ENCODE measurements at regions of chr19 and their contacts with region 1.

Region 1: GRCh38 chr19:44723952-44724319 is 24.6 kb upstream of the BCL3 start:
- DNase-seq: peak; percentile 64
- ATAC-seq: peak; percentile 71
- H3K4me3 ChIP-seq: peak overlapping the region in 2 of 3 experiments; percentile 11 to 61; a peak in 2 of 6 replicates
- H3K27ac ChIP-seq: no peak overlapping the region
- H3K4me1 ChIP-seq: peaks cover 90% of the 10 kb centered on the region
- H3K27me3 ChIP-seq: no peaks in the 10 kb centered on the region
- CTCF ChIP-seq: peak; percentile 98
- EP300 ChIP-seq: no peak
- POLR2A ChIP-seq: no peak
- RAD21 ChIP-seq: peak; percentile 98

Region 2: GRCh38 chr19:44626048-44626624 is 97.8 kb before region 1 on chr19:
- CTCF ChIA-PET with region 1: no interaction called
- POLR2A ChIA-PET with region 1: no interaction called
- in situ Hi-C with region 1: no loop called
- intact Hi-C with region 1: no loop called
- DNase-seq: peak; percentile 89
- ATAC-seq: peak; percentile 83
- H3K4me3 ChIP-seq: no peak overlapping the region
- H3K27ac ChIP-seq: peak overlapping the region; percentile 69
- H3K4me1 ChIP-seq: peaks cover 57% of the 10 kb centered on the region
- H3K27me3 ChIP-seq: no peaks in the 10 kb centered on the region
- CTCF ChIP-seq: no peak
- EP300 ChIP-seq: no peak
- POLR2A ChIP-seq: no peak
- RAD21 ChIP-seq: no peak

Region 3: GRCh38 chr19:44741841-44742352 is 18.0 kb after region 1 on chr19:
- CTCF ChIA-PET with region 1: interaction called, 3 read pairs
- POLR2A ChIA-PET with region 1: interaction called, 45 read pairs
- in situ Hi-C with region 1: no loop called
- intact Hi-C with region 1: no loop called
- DNase-seq: peak; percentile 78
- ATAC-seq: peak; percentile 44
- H3K4me3 ChIP-seq: peak overlapping the region; percentile 27 to 72 (median 53); a peak in 5 of 6 replicates
- H3K27ac ChIP-seq: peak overlapping the region; percentile 73
- H3K4me1 ChIP-seq: peaks cover 100% of the 10 kb centered on the region
- H3K27me3 ChIP-seq: no peaks in the 10 kb centered on the region
- CTCF ChIP-seq: no peak
- EP300 ChIP-seq: peak; percentile 44 to 61; a peak in 1 of 4 replicates
- POLR2A ChIP-seq: peak in 1 of 2 experiments; percentile 28; a peak in 1 of 4 replicates
- RAD21 ChIP-seq: no peak

Region 4: DNA sequence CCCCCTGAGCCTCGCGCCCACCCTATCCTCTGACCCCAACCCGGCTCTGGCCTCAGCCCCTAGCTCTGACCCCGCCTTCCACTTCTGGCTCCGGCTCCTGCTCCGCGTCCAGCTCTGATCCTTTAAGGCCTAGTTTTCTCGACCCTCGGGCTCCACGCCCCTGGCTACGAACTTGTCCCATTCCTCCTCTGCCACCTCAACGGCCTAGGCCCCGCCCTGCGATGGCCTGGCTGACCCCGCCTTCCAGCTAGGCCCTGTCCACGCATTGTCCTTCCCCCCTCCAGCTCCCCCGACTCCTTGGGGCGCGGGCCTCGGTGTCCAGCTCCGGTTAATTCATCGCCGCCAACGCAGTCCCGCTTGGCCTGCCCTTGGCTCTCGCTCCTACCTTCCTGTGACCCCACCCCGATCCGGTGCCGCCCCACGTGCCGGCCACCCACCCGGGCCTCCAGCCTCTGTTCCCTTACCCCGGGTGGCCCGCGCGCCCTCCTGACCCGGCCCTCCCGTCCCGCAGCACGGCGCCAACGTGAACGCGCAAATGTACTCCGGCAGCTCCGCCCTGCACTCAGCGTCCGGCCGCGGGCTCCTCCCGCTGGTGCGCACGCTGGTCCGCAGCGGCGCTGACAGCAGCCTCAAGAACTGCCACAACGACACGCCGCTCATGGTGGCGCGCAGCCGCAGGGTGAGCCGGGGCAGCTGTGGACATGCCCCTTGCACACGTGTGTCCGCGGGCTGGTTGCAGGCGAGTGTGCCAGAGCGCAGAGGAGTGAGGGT is 34.0 kb after region 1 on chr19:
- CTCF ChIA-PET with region 1: no interaction called
- POLR2A ChIA-PET with region 1: interaction called, 5 read pairs
- in situ Hi-C with region 1: loop called (anchors 5 kb)
- intact Hi-C with region 1: no loop called
- DNase-seq: no peak
- ATAC-seq: no peak
- H3K4me3 ChIP-seq: no peak overlapping the region
- H3K27ac ChIP-seq: no peak overlapping the region
- H3K4me1 ChIP-seq: peaks cover 32% of the 10 kb centered on the region
- H3K27me3 ChIP-seq: no peaks in the 10 kb centered on the region
- CTCF ChIP-seq: no peak
- EP300 ChIP-seq: no peak
- POLR2A ChIP-seq: no peak
- RAD21 ChIP-seq: no peak

Region 5: GRCh38 chr19:44764975-44765948 is 41.3 kb after region 1 on chr19:
- CTCF ChIA-PET with region 1: interaction called, 50 read pairs
- POLR2A ChIA-PET with region 1: interaction called, 42 read pairs
- in situ Hi-C with region 1: no loop called
- intact Hi-C with region 1: loop called (anchors 1 kb)
- DNase-seq: peak; percentile 91
- ATAC-seq: peak; percentile 61
- H3K4me3 ChIP-seq: 0 out of 6 replicates have a peak overlapping the region, but pooled peaks of 1 of the 3 experiments have one; percentile 3
- H3K27ac ChIP-seq: peak overlapping the region; percentile 51
- H3K4me1 ChIP-seq: peaks cover 61% of the 10 kb centered on the region
- H3K27me3 ChIP-seq: no peaks in the 10 kb centered on the region
- CTCF ChIP-seq: no peak
- EP300 ChIP-seq: peak; percentile 71 to 87; a peak in 3 of 4 replicates
- POLR2A ChIP-seq: no peak
- RAD21 ChIP-seq: no peak

Region 6: GRCh38 chr19:44770550-44771257 is 46.8 kb after region 1 on chr19:
- CTCF ChIA-PET with region 1: interaction called, 50 read pairs
- POLR2A ChIA-PET with region 1: interaction called, 42 read pairs
- in situ Hi-C with region 1: no loop called
- intact Hi-C with region 1: loop called (anchors 1 kb)
- DNase-seq: peak; percentile 89
- ATAC-seq: peak; percentile 98
- H3K4me3 ChIP-seq: no peak overlapping the region
- H3K27ac ChIP-seq: no peak overlapping the region
- H3K4me1 ChIP-seq: peaks cover 46% of the 10 kb centered on the region
- H3K27me3 ChIP-seq: no peaks in the 10 kb centered on the region
- CTCF ChIP-seq: peak; percentile 91
- EP300 ChIP-seq: no peak
- POLR2A ChIP-seq: no peak
- RAD21 ChIP-seq: peak; percentile 95